MCF 10A (cell line): ENCODE measurements at regions of chr1 and their contacts with region 1.

Region 1: DNA sequence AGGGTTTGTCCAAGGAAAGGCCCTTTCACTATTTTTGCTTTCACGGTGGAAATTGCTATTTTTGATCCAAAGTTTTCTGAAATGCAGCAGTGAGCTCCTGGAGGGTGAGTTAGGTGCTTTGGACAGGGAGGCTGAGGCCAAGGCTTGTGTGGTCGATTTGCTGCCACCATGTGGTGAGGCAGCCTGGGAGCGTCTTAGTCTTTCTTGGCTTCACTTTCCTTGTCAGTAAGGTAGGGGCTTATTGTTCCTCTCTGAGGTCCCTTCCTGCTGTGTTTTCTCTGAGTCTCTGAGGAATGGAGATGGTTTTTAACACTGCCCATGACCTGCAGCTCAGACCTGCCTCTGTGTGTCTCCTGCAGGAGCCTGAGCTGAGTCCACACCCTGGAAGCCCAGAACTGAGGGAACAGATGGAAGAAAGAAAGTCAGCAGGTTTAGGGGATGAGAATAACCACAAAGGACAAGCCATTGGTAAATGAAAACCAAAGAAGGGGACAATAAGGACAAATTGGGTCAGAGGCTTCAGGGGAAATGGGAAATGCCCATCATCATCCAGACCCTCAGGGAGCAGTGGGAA is 20.1 kb upstream of the S100A10 start:
- DNase-seq: peak; percentile 76
- H3K4me3 Mint-ChIP-seq: no peak overlapping the region
- H3K27ac Mint-ChIP-seq: no peak overlapping the region
- H3K4me1 Mint-ChIP-seq: peaks cover 12% of the 10 kb centered on the region
- H3K27me3 Mint-ChIP-seq: no peaks in the 10 kb centered on the region
- CTCF ChIP-seq: peak; percentile 75

Region 2: DNA sequence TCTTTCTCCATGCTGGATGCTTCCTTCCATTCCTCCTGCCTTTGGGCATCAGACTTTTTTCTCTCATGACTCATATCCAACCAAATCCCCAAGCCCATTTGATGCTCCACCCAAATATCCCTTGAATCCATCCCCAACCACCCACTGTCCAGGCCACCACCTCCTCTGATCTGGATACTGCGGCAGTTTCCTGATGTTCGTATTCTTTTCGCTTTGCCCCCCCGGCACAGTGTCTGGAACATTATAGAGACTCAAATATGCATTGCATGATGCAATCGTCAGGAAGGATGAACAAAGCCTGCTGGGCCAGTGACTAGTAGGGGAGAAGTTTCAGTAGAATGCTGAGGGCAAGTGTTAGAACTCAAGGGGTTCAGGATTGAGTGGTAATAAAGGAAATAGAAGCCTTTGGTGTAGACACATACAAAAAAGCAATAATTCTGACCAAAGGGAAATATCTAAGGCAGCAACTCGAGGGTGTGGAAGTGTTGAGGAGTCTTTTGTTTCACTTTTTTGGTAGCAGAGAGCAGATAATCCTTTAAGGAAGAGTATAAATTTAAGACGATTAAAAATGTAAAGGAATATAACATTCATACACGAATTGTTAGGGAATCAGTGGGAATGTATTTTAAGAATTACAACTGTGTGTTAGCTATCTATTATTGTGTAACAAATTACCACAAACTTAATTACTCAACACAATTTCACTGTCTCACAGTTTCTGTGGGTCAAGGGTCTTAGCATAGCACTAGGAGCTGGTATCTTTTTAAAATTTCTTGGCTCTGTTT is 15.6 kb after region 1 on chr1:
- CTCF ChIA-PET with region 1: interaction called, 31 read pairs
- POLR2A ChIA-PET with region 1: interaction called, 43 read pairs
- intact Hi-C with region 1: loop called (anchors 2 kb)
- DNase-seq: peak; percentile 95
- H3K4me3 Mint-ChIP-seq: no peak overlapping the region
- H3K27ac Mint-ChIP-seq: peak overlapping the region; percentile 69
- H3K4me1 Mint-ChIP-seq: peaks cover 59% of the 10 kb centered on the region
- H3K27me3 Mint-ChIP-seq: no peaks in the 10 kb centered on the region
- CTCF ChIP-seq: no peak

Region 3: GRCh38 chr1:152227310-152227928 is 213.7 kb after region 1 on chr1:
- CTCF ChIA-PET with region 1: no interaction called
- POLR2A ChIA-PET with region 1: no interaction called
- intact Hi-C with region 1: no loop called
- DNase-seq: peak; percentile 66
- H3K4me3 Mint-ChIP-seq: no peak overlapping the region
- H3K27ac Mint-ChIP-seq: no peak overlapping the region
- H3K4me1 Mint-ChIP-seq: peaks cover 17% of the 10 kb centered on the region
- H3K27me3 Mint-ChIP-seq: no peaks in the 10 kb centered on the region
- CTCF ChIP-seq: peak; percentile 79